ENCODE measurements at regions of chr2 and their contacts with region 1.

Region 1: GRCh38 chr2:148479398-148479797 is 165.2 kb upstream of the EPC2 start:
- DNase-seq: no peak
- ATAC-seq: no peak
- H3K4me3 ChIP-seq: no peak overlapping the region
- H3K27ac ChIP-seq: no peak overlapping the region
- H3K4me1 ChIP-seq: peaks cover 6% of the 10 kb centered on the region; the same call in 1 of the 2 replicates
- H3K27me3 ChIP-seq: no peaks in the 10 kb centered on the region
- CTCF ChIP-seq: no peak

Region 2: GRCh38 chr2:148020111-148021058 is 459.0 kb before region 1 on chr2 and contains the start of gene ORC4:
- CTCF ChIA-PET with region 1: no interaction called
- POLR2A ChIA-PET with region 1: interaction called, 10 read pairs
- in situ Hi-C with region 1: no loop called
- intact Hi-C with region 1: no loop called
- DNase-seq: peak; percentile 95
- ATAC-seq: peak; percentile 96
- H3K4me3 ChIP-seq: peak within 1 kb of the TSS; percentile 93 to 98
- H3K27ac ChIP-seq: peak within 1 kb of the TSS; percentile 96
- H3K4me1 ChIP-seq: peaks cover 24% of the 10 kb centered on the region; the same call in 1 of the 2 replicates
- H3K27me3 ChIP-seq: no peaks in the 10 kb centered on the region
- CTCF ChIP-seq: peak; percentile 72
- total RNA-seq, gene ORC4: 43.3 TPM

Measured in Panc1 (cell line).